Naive thymus-derived CD8-positive, alpha-beta T cell (primary cell): ENCODE measurements at regions of chr21 and their contacts with region 1.

Region 1: GRCh38 chr21:33185852-33186251 is 43.9 kb upstream of the IFNAR2 start:
- DNase-seq: peak in 6 of 10 donors; percentile 15 to 71 (median 46)
- ATAC-seq: peak; percentile 96 to 97
- H3K4me3 Mint-ChIP-seq: peak overlapping the region; percentile 26 to 82 (median 72)
- H3K27ac Mint-ChIP-seq: peak overlapping the region; percentile 47 to 95 (median 84)
- H3K4me1 Mint-ChIP-seq: peaks cover 30 to 45% (median 36%) of the 10 kb centered on the region in 4 donors
- H3K27me3 Mint-ChIP-seq: peaks cover 0 to 14% (median 0%) of the 10 kb centered on the region in 5 donors

Region 2: GRCh38 chr21:33199516-33200217 is 13.8 kb after region 1 on chr21:
- POLR2A ChIA-PET with region 1: interaction called, 17 read pairs
- DNase-seq: peak; percentile 40 to 88 (median 80)
- ATAC-seq: peak; percentile 92
- H3K4me3 Mint-ChIP-seq: no peak overlapping the region
- H3K27ac Mint-ChIP-seq: peak overlapping the region in 7 of 10 donors; percentile 57 to 84 (median 80)
- H3K4me1 Mint-ChIP-seq: peaks cover 22 to 60% (median 46%) of the 10 kb centered on the region in 4 donors
- H3K27me3 Mint-ChIP-seq: no peaks in the 10 kb centered on the region

Region 3: GRCh38 chr21:33212159-33212851 is 26.5 kb after region 1 on chr21:
- POLR2A ChIA-PET with region 1: no interaction called
- DNase-seq: peak in 2 of 10 donors; percentile 38 to 41
- ATAC-seq: peak; percentile 43 to 46
- H3K4me3 Mint-ChIP-seq: peak overlapping the region; percentile 42 to 88 (median 81)
- H3K27ac Mint-ChIP-seq: peak overlapping the region; percentile 87 to 99 (median 93)
- H3K4me1 Mint-ChIP-seq: peaks cover 40 to 88% (median 84%) of the 10 kb centered on the region in 4 donors
- H3K27me3 Mint-ChIP-seq: no peaks in the 10 kb centered on the region

Region 4: GRCh38 chr21:33332143-33332542 is 146.3 kb after region 1 on chr21:
- POLR2A ChIA-PET with region 1: no interaction called
- DNase-seq: no peak
- ATAC-seq: peak in 1 of 2 donors; percentile 49
- H3K4me3 Mint-ChIP-seq: peak overlapping the region in 8 of 10 donors; percentile 2 to 74 (median 40)
- H3K27ac Mint-ChIP-seq: peak overlapping the region in 8 of 10 donors; percentile 38 to 75 (median 58)
- H3K4me1 Mint-ChIP-seq: peaks cover 26 to 74% (median 64%) of the 10 kb centered on the region in 4 donors
- H3K27me3 Mint-ChIP-seq: no peaks in the 10 kb centered on the region